Spleen (tissue), 13 donors: ENCODE measurements at regions of chr1 and their contacts with region 1.

Region 1: DNA sequence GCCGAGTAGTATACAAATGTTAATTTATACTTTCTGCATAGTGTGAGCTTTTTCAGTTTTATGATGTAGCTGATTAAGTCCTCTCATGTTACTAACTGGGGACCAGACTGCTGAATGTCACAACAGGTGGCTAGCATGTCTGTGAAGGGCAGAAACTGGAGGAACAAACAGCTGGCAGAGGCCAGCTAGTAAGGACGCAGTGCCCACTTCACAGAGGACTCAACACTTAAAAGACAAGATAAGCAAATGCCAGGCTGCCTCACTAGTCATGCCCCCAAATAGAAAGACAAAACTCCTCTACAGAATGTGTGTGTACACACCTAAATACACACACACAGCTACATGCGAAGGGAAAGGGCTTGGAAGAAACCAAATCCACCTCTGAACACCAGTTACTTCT is 73.8 kb upstream of the ZNF678 start:
- DNase-seq: no peak
- H3K4me3 ChIP-seq: no peak overlapping the region
- H3K27ac ChIP-seq: no peak overlapping the region
- H3K4me1 ChIP-seq: no peaks in the 10 kb centered on the region
- H3K27me3 ChIP-seq: no peaks in the 10 kb centered on the region
- CTCF ChIP-seq: no peak
- POLR2A ChIP-seq: no peak

Region 2: DNA sequence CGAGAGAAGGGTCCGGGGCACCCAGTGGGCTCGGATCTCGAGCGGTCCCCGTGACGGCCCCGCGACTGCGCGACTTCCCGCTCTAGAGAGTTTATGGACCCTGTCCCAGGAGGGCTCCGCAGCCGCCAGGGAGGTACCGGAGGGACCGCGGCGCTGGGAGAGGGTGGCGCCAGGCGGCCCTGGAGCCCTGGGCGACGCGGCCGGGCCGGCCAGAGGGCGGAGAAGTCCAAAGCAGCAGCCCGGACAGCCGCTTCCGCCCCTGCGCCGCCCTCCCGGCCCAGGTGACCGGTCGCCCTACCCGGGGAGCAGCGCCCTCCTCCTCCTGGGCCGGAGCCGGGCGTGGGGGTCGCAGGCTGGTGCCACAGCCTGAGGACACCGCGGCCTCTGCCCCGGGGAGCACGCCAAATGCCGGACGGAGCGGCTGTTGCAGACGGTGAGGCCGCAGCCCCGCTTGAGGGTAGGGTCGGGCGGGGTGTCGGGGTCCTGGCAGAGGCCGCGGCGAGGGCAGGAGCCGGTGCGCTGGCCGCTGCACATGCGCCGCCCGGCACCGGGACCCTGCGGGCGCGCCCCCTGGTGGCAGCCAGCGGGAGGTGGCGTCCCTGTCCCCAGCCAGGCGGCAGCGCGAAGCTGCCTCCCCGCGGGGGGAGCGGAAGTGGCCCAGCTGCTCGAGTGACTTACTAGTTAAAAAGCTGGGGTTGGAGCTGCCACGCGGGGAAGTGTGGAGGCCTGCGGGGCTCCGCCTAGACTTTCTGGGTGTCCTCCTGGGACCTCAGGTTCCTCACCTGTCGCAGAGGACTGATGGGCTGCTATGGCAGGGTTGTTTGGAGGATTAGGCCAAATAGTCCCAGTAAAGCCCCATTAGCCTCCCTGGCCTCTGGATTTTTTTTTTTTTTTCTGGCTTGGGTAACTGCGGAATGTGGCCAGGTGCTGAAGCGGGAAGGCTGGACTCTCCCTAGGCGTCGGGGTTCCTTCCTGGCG is 52.9 kb after region 1 on chr1:
- intact Hi-C with region 1: loop called (anchors 10 kb)
- DNase-seq: peak; percentile 98
- H3K4me3 ChIP-seq: peak overlapping the region; percentile 51 to 79 (median 66)
- H3K27ac ChIP-seq: peak overlapping the region in 4 of 8 donors; percentile 11 to 76 (median 66)
- H3K4me1 ChIP-seq: peaks cover 0 to 21% (median 16%) of the 10 kb centered on the region in 6 donors
- H3K27me3 ChIP-seq: peaks cover 0 to 8% (median 0%) of the 10 kb centered on the region in 7 donors
- CTCF ChIP-seq: peak; percentile 66 to 100 (median 99)
- POLR2A ChIP-seq: no peak

Region 3: DNA sequence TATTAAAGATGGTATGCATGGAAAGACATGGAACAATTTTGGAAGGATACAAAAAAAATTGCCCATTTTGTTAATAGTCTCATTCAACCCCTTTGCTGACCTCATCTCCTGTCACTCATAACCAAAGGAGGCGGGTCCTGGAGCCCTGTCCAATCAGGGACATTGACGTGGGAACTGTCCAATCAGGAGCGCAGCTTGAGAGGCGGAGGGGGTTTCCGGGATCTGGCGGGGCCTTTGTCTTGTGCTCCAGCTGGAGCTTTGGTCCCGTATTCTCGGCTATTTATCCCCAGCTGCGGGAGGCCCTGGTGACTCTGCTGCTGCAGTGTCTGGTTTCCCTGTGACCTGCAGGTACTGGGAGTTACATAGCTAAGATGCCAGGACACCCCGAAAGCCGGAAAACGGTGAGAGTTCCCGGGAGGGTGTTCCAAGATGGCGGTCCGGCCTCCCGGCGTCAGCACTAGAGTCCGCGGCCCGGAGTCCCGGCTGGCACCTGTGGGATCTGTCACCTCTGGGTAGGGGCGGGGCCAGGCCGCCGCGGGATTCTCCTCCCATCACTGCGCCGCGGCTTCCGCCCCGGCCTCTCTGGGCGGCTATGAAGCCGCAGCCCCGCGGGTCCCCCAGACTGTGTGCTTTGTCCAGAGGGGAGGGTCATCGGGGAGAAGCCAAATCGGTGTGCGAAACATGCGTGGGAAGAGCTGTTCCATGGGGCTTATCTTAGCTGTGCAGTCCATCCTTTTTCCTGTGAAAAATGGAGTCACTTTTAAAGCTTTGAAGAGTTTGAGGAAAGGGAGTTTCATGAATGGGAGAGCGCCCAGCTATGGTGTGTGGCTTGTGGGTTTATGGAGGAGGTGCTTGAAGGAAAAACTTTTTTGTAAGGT is 74.0 kb after region 1 on chr1 and contains the start of gene ZNF678:
- intact Hi-C with region 1: no loop called
- DNase-seq: peak; percentile 92
- H3K4me3 ChIP-seq: peak within 1 kb of the TSS; percentile 65 to 83 (median 73)
- H3K27ac ChIP-seq: peak within 1 kb of the TSS; percentile 55 to 90 (median 88)
- H3K4me1 ChIP-seq: peaks cover 5 to 52% (median 16%) of the 10 kb centered on the region in 6 donors
- H3K27me3 ChIP-seq: peaks cover 5 to 36% (median 26%) of the 10 kb centered on the region in 7 donors
- CTCF ChIP-seq: no peak
- POLR2A ChIP-seq: no peak
- total RNA-seq, gene ZNF678: 9.2 to 24.5 (median 13.5) TPM

Region 4: DNA sequence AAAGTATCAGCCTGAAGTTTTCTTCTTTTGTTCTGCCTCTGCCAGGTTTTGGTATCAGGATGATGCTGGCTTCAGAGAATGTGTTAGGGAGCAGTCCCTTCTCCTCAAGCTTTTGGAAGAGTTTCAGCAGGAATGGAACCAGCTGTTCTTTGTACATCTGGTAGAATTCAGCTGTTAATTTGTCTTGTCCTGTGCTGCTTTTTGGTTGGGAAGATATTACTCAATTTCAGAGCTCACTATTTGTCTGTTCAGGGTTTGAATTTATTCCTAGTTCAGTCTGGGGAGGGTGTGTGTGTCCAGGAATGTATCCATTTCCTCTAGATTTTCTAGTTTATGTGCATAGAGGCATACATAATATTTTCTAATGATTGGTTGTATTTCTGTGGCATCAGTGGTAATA is 86.6 kb after region 1 on chr1:
- intact Hi-C with region 1: no loop called
- DNase-seq: no peak
- H3K4me3 ChIP-seq: no peak overlapping the region
- H3K27ac ChIP-seq: no peak overlapping the region
- H3K4me1 ChIP-seq: no peaks in the 10 kb centered on the region
- H3K27me3 ChIP-seq: no peaks in the 10 kb centered on the region
- CTCF ChIP-seq: no peak
- POLR2A ChIP-seq: no peak